ENCODE measurements at regions of chr3 and their contacts with region 1.

Region 1: DNA sequence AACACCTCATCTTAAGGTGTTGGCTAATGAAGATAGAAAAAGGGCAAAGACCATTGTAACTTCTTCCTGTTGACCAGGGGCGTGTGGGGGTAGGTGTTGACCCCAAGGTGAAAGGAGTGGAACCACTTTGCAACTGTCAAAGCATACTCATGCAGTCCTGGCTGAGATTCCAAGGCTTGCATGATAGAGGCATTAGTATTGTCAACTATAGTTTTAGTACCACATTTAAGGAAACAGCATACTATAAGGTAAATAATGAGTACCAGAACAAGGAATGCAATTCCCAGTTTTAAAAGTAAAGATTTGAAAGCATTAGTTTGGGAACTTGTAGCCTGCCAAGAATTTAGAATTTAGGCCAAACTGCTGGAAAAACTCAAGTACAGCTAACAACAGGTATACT is 27.8 kb upstream of the ADGRG7 start:
- DNase-seq: no peak
- H3K4me3 ChIP-seq: no peak overlapping the region
- CTCF ChIP-seq: no peak
- POLR2A ChIP-seq: no peak

Region 2: GRCh38 chr3:99366663-99367429 is 1214.8 kb before region 1 on chr3:
- intact Hi-C with region 1: no loop called
- DNase-seq: no peak
- H3K4me3 ChIP-seq: no peak overlapping the region
- CTCF ChIP-seq: no peak
- POLR2A ChIP-seq: no peak

Region 3: GRCh38 chr3:100419406-100419805 is 162.2 kb before region 1 on chr3:
- intact Hi-C with region 1: no loop called
- DNase-seq: no peak
- H3K4me3 ChIP-seq: no peak overlapping the region
- CTCF ChIP-seq: no peak
- POLR2A ChIP-seq: no peak

Region 4: GRCh38 chr3:100463002-100463401 is 118.6 kb before region 1 on chr3:
- intact Hi-C with region 1: loop called (anchors 10 kb)
- DNase-seq: peak in 1 of 2 donors; percentile 32
- H3K4me3 ChIP-seq: no peak overlapping the region
- CTCF ChIP-seq: no peak
- POLR2A ChIP-seq: no peak

Measured in lower leg skin (tissue), 4 donors.